ENCODE measurements at regions of chr9 and their contacts with region 1.

Region 1: DNA sequence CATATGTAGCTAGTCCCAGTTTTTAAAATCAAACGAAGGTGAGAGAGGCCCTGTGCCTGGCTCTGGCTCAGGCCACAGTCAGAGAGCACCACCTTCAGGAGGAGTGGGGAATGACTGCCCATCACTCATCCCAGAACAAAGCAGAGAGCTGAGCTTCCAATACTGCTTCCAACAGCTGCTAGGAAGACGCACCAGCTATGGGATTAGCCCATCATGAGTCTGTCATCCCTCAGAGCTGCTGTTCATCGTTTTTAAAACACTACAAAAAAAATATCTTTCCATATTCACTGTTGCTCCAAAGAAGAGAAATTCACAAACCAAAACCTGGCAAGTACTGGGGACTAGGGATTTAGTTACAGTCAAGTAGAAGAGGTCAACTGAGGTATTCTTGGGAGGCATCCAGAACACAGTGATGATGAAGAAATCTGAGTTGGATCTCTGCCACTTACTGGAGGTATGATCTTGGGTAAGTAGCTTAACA is 102.4 kb downstream of the CDK5RAP2 start:
- DNase-seq: peak; percentile 29 to 85
- H3K4me3 ChIP-seq: no peak overlapping the region
- H3K27ac ChIP-seq: no peak overlapping the region
- H3K4me1 ChIP-seq: peaks cover 0 to 4% (median 0%) of the 10 kb centered on the region in 4 experiments; a peak in 2 of 7 replicates
- H3K27me3 ChIP-seq: no peaks in the 10 kb centered on the region
- CTCF ChIP-seq: peak; percentile 80 to 94 (median 88)
- EP300 ChIP-seq: no peak
- POLR2A ChIP-seq: no peak
- RAD21 ChIP-seq: peak; percentile 88 to 89

Region 2: DNA sequence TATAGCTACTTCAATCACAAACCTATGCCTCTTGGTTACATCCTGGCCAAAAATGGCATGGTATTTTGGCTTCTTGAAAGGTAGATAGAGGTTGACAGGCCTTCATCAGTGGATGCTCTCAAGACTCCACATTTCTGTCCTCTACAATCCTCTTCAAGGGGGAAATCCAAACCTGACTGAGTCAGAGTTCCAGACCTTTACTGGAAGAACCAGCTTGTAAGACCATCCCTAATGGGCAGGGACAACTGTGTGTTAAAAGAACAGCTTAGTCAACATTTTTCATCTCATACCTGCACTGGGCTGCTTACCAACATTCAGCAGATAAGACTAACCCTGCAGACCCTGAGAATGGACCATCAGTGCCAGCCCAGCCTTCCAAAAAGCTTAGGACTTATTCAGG is 53.3 kb before region 1 on chr9:
- CTCF ChIA-PET with region 1: interaction called, 18 read pairs
- POLR2A ChIA-PET with region 1: no interaction called
- DNase-seq: no peak
- H3K4me3 ChIP-seq: no peak overlapping the region
- H3K27ac ChIP-seq: no peak overlapping the region
- H3K4me1 ChIP-seq: peaks cover 0 to 7% (median 0%) of the 10 kb centered on the region in 4 experiments; a peak in 2 of 7 replicates
- H3K27me3 ChIP-seq: no peaks in the 10 kb centered on the region
- CTCF ChIP-seq: no peak
- EP300 ChIP-seq: no peak
- POLR2A ChIP-seq: no peak
- RAD21 ChIP-seq: no peak

Region 3: DNA sequence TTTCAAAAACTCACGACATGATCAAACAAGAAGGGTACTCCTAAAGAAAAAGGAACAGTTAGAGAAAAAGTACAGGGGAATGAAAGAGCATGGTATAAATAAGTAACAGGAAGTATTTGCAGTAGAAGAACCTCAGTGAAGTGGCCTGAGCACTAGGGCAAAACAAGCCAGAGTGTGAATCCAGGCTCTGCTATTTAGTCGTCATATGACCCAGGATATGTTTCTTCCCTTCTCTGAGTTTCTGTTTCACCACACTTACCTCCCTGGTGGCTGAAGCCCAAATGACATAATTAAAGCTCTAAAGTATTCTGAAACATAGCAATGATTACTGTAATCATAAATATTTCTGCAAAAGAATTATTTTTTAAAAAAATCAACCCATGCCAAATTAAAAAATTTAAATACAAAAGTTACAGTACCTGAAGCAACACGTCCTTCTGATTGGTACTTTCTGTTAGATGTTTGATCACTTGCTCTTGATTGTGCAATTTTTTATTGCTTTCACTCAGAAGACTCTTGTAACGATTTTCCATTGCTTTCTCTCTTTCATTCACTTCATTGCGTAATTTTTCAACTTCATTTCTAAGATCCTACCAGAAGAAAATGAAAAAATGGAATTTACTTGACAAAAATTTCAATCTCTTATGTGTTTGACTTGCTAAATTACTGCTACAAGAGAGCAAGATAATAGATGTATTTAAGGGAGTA is 13.5 kb after region 1 on chr9:
- CTCF ChIA-PET with region 1: interaction called, 11 read pairs
- POLR2A ChIA-PET with region 1: no interaction called
- DNase-seq: no peak
- H3K4me3 ChIP-seq: no peak overlapping the region
- H3K27ac ChIP-seq: no peak overlapping the region
- H3K4me1 ChIP-seq: no peaks in the 10 kb centered on the region; a peak in 1 of 7 replicates
- H3K27me3 ChIP-seq: no peaks in the 10 kb centered on the region
- CTCF ChIP-seq: no peak
- EP300 ChIP-seq: no peak
- POLR2A ChIP-seq: no peak
- RAD21 ChIP-seq: no peak

Region 4: DNA sequence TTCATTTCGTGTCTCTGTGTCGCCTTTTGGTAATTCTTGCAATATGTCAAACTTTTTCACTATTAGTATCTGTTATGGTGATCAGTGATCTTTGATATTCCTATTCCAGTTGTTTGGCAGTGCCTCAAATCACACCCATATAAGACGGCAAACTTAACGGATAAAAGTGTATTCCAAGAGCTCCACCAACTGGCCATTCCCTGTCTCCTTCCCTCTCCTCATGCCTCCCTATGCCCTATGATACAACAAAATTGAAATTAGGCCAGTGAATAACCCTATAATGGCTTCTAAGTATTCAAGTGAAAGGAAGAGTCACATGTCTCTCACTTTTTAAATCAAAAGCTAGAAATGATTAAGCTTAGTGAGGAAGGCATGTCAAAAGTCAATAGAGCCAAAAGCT is 27.6 kb after region 1 on chr9:
- CTCF ChIA-PET with region 1: interaction called, 14 read pairs
- POLR2A ChIA-PET with region 1: no interaction called
- DNase-seq: no peak
- H3K4me3 ChIP-seq: no peak overlapping the region
- H3K27ac ChIP-seq: no peak overlapping the region
- H3K4me1 ChIP-seq: no peaks in the 10 kb centered on the region
- H3K27me3 ChIP-seq: no peaks in the 10 kb centered on the region
- CTCF ChIP-seq: peak in 1 of 3 experiments; percentile 38; a peak in 1 of 4 replicates
- EP300 ChIP-seq: no peak
- POLR2A ChIP-seq: no peak
- RAD21 ChIP-seq: peak; percentile 46 to 49

Region 5: DNA sequence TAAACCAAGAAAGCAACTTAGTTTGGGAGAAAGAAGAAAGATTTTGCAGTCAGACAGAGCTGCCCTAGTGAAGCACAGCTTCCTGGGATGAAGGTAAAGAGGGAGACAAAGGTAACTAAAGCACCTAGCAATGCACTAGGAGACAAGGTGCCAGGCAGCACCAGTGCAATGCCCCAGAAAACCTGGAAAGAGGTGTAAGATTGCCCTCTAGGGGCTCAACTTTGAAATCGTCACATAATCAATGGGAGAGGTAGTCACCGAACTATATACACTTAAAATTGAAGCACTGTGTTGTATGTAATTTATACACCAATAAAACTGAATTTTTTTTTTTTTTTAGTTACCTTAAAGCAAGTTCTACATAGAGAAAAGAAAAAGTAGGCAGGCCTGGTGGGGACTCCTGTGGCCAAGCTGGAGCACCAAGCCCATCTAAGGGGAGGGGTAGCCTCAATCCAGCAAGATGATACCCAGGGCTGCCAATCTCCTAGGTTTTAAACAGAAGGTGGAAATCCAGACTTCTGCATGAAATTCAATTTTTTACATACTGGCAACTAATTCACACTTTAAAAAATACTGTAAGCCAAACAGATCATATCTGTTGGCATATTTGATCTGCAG is 54.2 kb after region 1 on chr9:
- CTCF ChIA-PET with region 1: interaction called, 30 read pairs
- POLR2A ChIA-PET with region 1: no interaction called
- DNase-seq: peak in 1 of 2 experiments; percentile 52
- H3K4me3 ChIP-seq: no peak overlapping the region
- H3K27ac ChIP-seq: no peak overlapping the region
- H3K4me1 ChIP-seq: peaks cover 0 to 14% (median 10%) of the 10 kb centered on the region in 4 experiments; a peak in 6 of 7 replicates
- H3K27me3 ChIP-seq: no peaks in the 10 kb centered on the region
- CTCF ChIP-seq: peak; percentile 26 to 63 (median 56)
- EP300 ChIP-seq: no peak
- POLR2A ChIP-seq: no peak
- RAD21 ChIP-seq: peak; percentile 78 to 79

Region 6: DNA sequence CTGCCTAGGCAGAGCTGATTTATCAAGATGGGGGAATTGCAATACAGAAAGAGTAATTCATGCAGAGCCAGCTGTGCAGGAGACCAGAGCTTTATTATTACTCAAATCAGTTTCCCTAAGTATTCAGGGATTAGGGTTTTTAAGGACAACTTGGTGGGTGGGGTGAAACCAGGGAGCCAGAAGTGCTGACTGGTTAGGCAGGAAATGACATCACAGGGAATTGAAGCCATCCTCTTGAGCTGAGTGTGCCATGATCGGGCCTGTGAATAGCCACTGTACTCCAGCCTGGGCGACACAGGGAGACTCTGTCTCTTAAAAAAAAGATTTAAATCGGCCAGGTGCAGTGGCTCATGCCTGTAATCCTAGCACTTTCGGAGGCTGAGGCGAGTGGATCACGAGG is 147.7 kb after region 1 on chr9:
- CTCF ChIA-PET with region 1: no interaction called
- POLR2A ChIA-PET with region 1: no interaction called
- DNase-seq: no peak
- H3K4me3 ChIP-seq: no peak overlapping the region
- H3K27ac ChIP-seq: no peak overlapping the region
- H3K4me1 ChIP-seq: peaks cover 0 to 6% (median 0%) of the 10 kb centered on the region in 4 experiments; a peak in 1 of 7 replicates
- H3K27me3 ChIP-seq: no peaks in the 10 kb centered on the region
- CTCF ChIP-seq: no peak
- EP300 ChIP-seq: no peak
- POLR2A ChIP-seq: no peak
- RAD21 ChIP-seq: no peak

Measured in H1 (cell line).